ENCODE measurements at regions of chr9 and their contacts with region 1.

Region 1: DNA sequence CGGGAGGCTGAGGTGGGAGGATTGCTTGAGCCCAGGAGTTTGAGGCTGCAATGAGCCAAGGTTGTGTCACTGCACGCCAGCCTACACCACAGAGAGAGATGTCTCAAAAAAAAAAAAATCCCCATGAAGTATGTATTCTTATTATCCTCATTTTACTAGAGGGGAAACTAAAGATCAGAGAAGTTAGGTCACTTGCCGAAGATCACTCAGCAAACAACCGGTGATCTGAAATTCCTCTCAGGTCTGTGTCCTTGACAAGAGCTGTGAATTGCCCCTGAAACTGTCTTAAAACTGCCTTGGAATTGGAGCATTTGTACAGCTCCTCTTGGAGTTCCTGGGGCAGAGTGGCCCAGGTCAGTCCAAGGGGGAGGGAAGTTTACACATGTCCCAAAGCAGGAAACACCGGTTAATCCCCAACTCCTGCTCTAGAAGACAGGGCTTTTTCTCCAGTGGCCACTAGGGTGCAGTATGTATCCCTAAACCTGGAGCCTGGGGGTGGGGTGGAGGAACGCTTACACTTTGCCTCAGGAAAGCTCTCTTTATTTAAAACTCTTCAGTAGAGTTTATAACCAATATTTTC is 27.6 kb downstream of the AQP7 start:
- DNase-seq: peak; percentile 82 to 84
- H3K4me3 ChIP-seq: no peak overlapping the region
- H3K4me3 Mint-ChIP-seq: no peak overlapping the region
- H3K27ac Mint-ChIP-seq: no peak overlapping the region
- H3K4me1 ChIP-seq: peaks cover 27% of the 10 kb centered on the region
- H3K4me1 Mint-ChIP-seq: peaks cover 22% of the 10 kb centered on the region
- H3K27me3 ChIP-seq: no peaks in the 10 kb centered on the region
- H3K27me3 Mint-ChIP-seq: no peaks in the 10 kb centered on the region
- CTCF ChIP-seq: peak; percentile 75 to 91

Region 2: GRCh38 chr9:33393581-33393980 is 18.9 kb after region 1 on chr9:
- CTCF ChIA-PET with region 1: interaction called, 4 read pairs
- POLR2A ChIA-PET with region 1: no interaction called
- intact Hi-C with region 1: loop called (anchors 2 kb)
- DNase-seq: no peak
- H3K4me3 ChIP-seq: no peak overlapping the region
- H3K4me3 Mint-ChIP-seq: no peak overlapping the region
- H3K27ac Mint-ChIP-seq: no peak overlapping the region
- H3K4me1 ChIP-seq: peaks cover 37% of the 10 kb centered on the region
- H3K4me1 Mint-ChIP-seq: peaks cover 38% of the 10 kb centered on the region
- H3K27me3 ChIP-seq: no peaks in the 10 kb centered on the region
- H3K27me3 Mint-ChIP-seq: no peaks in the 10 kb centered on the region
- CTCF ChIP-seq: no peak

Region 3: DNA sequence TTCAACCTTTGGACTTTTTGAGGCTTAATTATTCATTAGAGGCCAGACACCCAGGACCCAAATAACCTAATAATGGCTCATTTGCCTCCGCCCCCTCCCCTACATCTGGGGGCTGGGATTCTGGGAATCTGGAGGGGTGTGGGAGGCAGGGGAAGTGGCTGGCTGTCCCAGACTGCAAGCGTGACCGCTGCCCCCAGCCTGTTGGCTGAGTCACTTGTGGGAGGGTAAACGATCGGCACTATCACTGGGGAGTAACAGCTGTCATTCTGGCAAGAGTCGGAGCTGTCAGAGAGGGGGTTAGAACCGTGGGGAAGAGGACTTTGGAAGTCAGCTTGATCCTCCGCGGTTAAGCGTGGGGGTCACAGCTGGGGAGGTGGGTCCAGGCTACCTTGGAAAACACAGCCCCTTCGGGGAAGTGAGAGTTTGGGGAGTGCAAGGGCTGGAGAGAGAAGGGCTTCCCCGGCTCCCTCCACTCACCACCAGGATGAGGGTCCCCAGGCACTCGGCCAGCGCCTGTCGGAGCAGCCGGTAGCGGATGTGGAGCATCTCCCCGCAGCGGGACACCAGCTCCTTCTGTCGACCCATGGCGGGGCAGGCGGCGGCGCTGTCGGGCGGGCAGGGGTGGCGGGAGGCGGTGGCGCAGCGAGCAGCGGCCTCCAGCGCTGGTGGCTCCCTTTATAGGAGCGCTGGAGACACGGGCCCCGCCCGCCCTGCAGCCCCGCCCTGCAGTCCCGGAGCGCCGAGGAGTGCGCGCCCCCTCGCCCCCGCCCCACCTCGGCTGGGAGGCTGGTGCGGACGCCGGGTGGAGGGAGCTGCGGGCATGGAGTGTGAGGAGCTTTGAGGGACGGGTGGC is 72.4 kb after region 1 on chr9 and contains the start of gene AQP3:
- CTCF ChIA-PET with region 1: interaction called, 30 read pairs
- POLR2A ChIA-PET with region 1: no interaction called
- intact Hi-C with region 1: loop called (anchors 5 kb)
- DNase-seq: peak; percentile 82 to 85
- H3K4me3 ChIP-seq: peak within 1 kb of the TSS; percentile 62
- H3K4me3 Mint-ChIP-seq: peak within 1 kb of the TSS; percentile 77
- H3K27ac Mint-ChIP-seq: peak within 1 kb of the TSS; percentile 62
- H3K4me1 ChIP-seq: peaks cover 49% of the 10 kb centered on the region
- H3K4me1 Mint-ChIP-seq: peaks cover 30% of the 10 kb centered on the region
- H3K27me3 ChIP-seq: no peaks in the 10 kb centered on the region
- H3K27me3 Mint-ChIP-seq: no peaks in the 10 kb centered on the region
- CTCF ChIP-seq: peak; percentile 33
- total RNA-seq, gene AQP3: 24.1 and 24.8 TPM in 2 replicates

Region 4: DNA sequence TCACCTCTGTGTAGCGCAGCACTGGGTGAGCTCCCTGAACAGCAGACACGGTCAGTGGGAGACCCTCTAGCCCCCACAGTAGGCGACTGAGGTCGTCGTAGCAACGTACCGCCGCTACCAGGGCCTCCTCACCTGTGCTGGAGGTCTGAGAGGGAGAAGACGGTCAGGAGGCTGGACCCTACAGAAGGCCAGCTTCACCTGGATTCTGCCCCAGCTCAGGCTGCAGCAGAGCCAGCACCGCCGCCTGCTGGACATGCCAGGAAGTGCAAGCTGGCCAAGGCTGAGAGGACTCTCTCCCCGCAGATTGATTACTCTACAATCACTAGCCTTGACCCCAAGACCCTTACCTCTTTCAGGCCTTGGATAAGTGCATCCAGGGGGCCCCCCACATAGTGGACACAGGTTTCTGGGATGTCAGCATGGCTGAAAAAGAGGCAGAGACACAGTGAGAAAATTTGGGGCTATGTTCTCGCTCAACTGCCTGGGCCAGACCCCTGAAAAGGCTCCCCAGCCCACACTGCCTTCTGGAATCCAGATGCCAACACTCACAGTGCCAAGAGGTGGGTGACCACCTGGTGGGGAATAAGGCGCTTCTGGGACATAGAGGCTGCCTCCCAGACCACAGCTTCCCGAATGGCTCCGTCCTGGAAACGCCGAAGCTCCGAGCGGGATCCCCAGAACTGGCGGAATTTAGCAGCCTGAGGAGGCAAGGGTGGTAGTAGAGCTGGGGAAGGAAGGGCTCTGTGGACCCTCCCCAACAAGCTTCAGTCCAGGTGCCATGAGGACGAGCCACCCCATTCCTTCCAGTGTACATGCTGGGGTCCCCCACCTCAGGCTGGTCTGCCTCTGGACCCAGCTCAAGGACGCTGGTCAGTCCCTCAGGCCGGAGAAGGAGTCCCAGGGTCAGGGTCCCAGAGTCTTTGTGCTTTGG is 92.1 kb after region 1 on chr9:
- CTCF ChIA-PET with region 1: interaction called, 36 read pairs
- POLR2A ChIA-PET with region 1: no interaction called
- intact Hi-C with region 1: no loop called
- DNase-seq: peak; percentile 67 to 84
- H3K4me3 ChIP-seq: no peak overlapping the region
- H3K4me3 Mint-ChIP-seq: no peak overlapping the region
- H3K27ac Mint-ChIP-seq: no peak overlapping the region
- H3K4me1 ChIP-seq: peaks cover under 1% of the 10 kb centered on the region; the same call in 1 of the 2 replicates
- H3K4me1 Mint-ChIP-seq: peaks cover 7% of the 10 kb centered on the region
- H3K27me3 ChIP-seq: no peaks in the 10 kb centered on the region
- H3K27me3 Mint-ChIP-seq: no peaks in the 10 kb centered on the region
- CTCF ChIP-seq: peak; percentile 96 to 97